ENCODE measurements at regions of chr10 and their contacts with region 1.

Region 1: GRCh38 chr10:103481974-103482531 is 3.0 kb upstream of the CALHM3 start:
- DNase-seq: no peak
- H3K4me3 ChIP-seq: no peak overlapping the region
- H3K27ac ChIP-seq: no peak overlapping the region
- H3K4me1 ChIP-seq: no peaks in the 10 kb centered on the region
- H3K27me3 ChIP-seq: no peaks in the 10 kb centered on the region
- CTCF ChIP-seq: peak; percentile 21 to 57 (median 48)
- POLR2A ChIP-seq: no peak

Region 2: DNA sequence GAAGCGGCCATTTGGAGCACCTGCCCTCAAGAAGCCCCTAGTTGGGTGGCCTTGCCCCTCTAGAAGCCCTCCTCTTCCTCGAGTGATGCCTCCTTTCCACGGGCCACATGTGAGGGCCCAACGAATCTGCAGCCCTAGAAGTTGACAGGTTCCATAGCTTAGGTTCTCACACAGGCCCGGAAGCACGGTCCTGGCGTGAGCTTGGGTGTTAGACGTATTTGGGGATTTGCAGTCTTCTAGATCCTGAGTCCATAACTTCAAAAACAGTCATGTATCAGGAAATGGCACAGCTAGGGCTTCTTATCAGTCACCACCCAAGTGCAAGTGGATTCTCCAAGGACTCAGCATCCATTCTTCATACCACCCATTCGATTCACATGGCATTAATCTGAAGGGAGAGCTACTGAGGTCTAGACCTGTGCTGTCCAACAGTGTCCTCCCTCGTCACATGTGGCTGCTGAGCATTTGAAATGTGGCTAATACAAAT is 1786.6 kb before region 1 on chr10:
- intact Hi-C with region 1: no loop called
- DNase-seq: no peak
- H3K4me3 ChIP-seq: peak overlapping the region; percentile 66 to 84 (median 76)
- H3K27ac ChIP-seq: peak overlapping the region; percentile 99 to 100
- H3K4me1 ChIP-seq: peaks cover 0 to 11% of the 10 kb centered on the region in 2 donors
- H3K27me3 ChIP-seq: no peaks in the 10 kb centered on the region
- CTCF ChIP-seq: no peak
- POLR2A ChIP-seq: no peak

Region 3: GRCh38 chr10:102064868-102065560 is 1417.0 kb before region 1 on chr10 and contains the start of gene HPS6:
- intact Hi-C with region 1: loop called (anchors 5 kb)
- DNase-seq: peak; percentile 74 to 89
- H3K4me3 ChIP-seq: peak within 1 kb of the TSS; percentile 73 to 100 (median 91)
- H3K27ac ChIP-seq: peak within 1 kb of the TSS; percentile 90 to 97
- H3K4me1 ChIP-seq: peaks cover 0 to 13% of the 10 kb centered on the region in 2 donors
- H3K27me3 ChIP-seq: no peaks in the 10 kb centered on the region
- CTCF ChIP-seq: no peak
- POLR2A ChIP-seq: peak; percentile 26
- total RNA-seq, gene HPS6: 17.4 to 22.7 (median 19.7) TPM

Region 4: DNA sequence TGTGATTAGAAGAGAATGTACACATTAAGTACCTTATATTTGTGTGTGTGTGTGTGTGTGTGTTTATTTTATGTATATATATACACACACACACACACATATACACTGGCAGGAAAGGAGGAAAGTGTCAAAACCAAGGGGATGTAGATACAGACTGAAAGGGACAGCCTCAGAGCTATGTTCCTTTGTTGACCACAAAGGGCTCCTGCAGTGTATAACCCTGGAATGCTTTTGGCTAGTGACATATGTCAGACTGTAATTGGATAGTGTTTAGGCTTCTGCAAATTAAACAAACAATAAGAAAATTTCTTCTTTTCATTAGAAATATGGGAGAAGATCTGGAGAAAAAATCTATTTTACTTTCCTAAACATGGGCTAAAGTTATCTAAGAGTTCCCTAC is 1220.9 kb before region 1 on chr10:
- intact Hi-C with region 1: no loop called
- DNase-seq: no peak
- H3K4me3 ChIP-seq: no peak overlapping the region
- H3K27ac ChIP-seq: no peak overlapping the region
- H3K4me1 ChIP-seq: no peaks in the 10 kb centered on the region
- H3K27me3 ChIP-seq: no peaks in the 10 kb centered on the region
- CTCF ChIP-seq: no peak
- POLR2A ChIP-seq: no peak

Region 5: DNA sequence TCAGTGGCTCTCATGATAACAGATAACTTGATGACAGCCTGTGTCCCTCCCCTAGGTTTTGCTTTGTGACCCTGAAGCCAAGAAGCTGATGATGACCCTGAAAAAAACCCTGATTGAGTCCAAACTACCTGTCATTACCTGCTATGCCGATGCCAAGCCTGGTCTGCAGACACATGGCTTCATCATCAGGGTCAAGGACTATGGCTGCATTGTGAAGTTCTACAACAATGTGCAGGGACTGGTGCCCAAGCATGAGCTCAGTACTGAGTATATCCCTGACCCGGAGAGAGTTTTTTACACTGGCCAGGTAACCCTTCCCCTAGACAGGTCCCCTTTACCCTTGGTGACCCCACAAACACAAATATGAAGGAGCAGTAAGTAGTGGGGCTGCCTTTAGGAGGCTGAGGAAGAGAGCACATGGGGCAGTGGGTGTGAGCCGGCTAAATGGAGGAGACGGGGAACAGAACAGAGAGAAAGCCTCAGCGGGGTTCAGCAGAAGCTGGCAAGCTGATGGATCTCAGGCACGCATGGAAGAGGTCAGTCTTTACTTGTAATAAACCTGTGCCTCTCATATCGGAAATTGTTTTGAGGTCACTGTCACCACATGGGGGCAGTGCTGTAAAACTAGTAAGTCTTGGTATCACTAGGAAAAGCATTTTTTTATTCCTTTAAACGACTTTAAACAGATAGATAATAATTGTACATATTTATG is 65.5 kb before region 1 on chr10:
- intact Hi-C with region 1: loop called (anchors 2 kb)
- DNase-seq: peak in 1 of 2 donors; percentile 52
- H3K4me3 ChIP-seq: no peak overlapping the region
- H3K27ac ChIP-seq: no peak overlapping the region
- H3K4me1 ChIP-seq: no peaks in the 10 kb centered on the region
- H3K27me3 ChIP-seq: no peaks in the 10 kb centered on the region
- CTCF ChIP-seq: peak; percentile 16 to 66 (median 66)
- POLR2A ChIP-seq: no peak

Region 6: DNA sequence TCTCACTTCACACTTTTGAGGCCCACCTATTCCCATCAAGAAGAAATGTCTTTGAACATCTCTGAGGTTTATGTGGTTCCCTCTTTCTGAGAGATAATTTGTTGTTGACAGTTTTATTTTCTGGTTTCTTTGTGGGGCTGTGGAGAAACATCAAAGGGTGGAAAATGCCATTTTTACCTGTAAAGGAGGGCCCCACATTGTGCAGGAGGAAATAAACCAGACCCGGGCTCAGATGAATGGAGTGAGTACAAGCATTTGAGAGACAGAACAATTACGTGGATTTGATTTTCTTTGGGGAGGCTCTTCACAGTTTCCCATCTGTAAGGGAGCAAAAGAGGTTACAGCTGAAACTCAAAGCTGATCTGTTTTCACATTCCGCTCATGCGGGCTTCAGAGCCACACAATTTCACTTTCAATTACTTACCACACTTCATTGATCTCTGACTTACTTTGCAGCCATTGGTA is 826.4 kb after region 1 on chr10:
- intact Hi-C with region 1: no loop called
- DNase-seq: no peak
- H3K4me3 ChIP-seq: no peak overlapping the region
- H3K27ac ChIP-seq: no peak overlapping the region
- H3K4me1 ChIP-seq: no peaks in the 10 kb centered on the region
- H3K27me3 ChIP-seq: no peaks in the 10 kb centered on the region
- CTCF ChIP-seq: no peak
- POLR2A ChIP-seq: no peak